Left cardiac atrium (tissue), 4 donors: ENCODE measurements at regions of chr10 and their contacts with region 1.

Region 1: DNA sequence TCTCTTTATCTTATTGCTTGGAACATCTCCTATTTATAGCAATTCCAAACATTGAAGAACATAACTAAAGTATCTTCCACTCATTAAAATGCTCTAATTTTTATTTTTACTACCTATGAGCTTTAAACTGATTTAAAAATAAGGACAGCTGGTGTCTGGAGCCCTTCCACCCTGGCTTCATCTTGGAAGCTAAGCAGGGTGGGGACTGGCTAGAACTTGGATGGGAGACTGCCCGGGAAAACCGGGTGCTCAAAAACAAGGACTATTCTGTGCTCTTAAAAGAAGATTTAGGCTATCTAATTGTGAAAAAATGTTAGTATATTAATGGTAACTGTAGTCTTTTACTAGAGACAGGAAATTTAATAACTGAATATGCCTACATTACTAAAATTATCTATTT is 69.2 kb downstream of the ARMC3 start:
- DNase-seq: no peak
- ATAC-seq: peak in 1 of 2 donors; percentile 39

Region 2: DNA sequence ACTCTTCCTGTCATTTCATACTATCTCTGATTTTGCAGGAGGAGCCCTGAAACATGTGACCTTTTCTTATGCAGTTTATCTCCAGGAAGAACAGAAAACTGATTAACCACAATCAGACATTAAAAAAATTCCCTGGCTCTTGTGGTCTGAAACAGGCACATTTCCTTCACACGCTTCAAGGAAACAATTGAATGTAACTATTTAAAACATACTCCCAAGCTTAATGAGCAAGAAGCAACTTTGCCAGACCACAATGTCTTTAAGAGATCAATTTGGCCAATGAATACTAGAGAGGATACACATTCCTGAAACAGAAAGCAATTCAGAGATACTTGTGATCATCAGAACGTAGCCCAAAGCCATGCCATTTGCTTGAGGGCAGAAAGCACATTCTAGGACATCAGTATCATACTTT is 348.5 kb before region 1 on chr10:
- intact Hi-C with region 1: no loop called
- DNase-seq: no peak
- ATAC-seq: no peak

Region 3: DNA sequence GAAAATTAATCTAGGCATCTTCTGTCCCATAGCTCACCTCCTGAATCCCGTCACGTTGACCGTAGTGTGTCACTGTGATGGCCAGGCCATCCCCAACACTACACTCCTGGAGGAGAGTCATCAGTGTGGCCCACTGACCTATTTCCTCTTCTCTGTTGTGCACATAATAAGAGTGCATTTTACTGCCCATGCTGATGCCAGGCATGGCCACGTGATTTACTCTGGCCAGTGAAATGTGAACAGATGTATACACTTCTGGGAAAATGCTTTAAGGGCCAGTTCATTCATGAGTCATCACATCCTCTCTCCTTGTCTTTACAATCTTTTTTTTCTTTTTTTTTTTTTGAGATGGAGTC is 180.8 kb before region 1 on chr10:
- intact Hi-C with region 1: no loop called
- DNase-seq: no peak
- ATAC-seq: peak in 1 of 2 donors; percentile 65

Region 4: GRCh38 chr10:23067939-23068775 is 71.1 kb after region 1 on chr10:
- intact Hi-C with region 1: loop called in 1 of 2 experiments (anchors 10 kb)
- DNase-seq: peak; percentile 84
- ATAC-seq: peak; percentile 68 to 70